ENCODE measurements at regions of chr3 and their contacts with region 1.

Region 1: GRCh38 chr3:97971677-97972567 is at the start of gene RIOX2:
- DNase-seq: peak; percentile 83
- ATAC-seq: peak; percentile 92
- H3K4me3 ChIP-seq: peak within 1 kb of the TSS; percentile 13 to 73 (median 64)
- H3K4me3 Mint-ChIP-seq: peak within 1 kb of the TSS; percentile 98
- H3K27ac ChIP-seq: peak within 1 kb of the TSS; percentile 49 to 77
- H3K27ac Mint-ChIP-seq: peak within 1 kb of the TSS; percentile 96
- H3K4me1 ChIP-seq: peaks cover 15 to 16% of the 10 kb centered on the region in 2 donors
- H3K4me1 Mint-ChIP-seq: peaks cover 38% of the 10 kb centered on the region
- H3K27me3 ChIP-seq: no peaks in the 10 kb centered on the region
- H3K27me3 Mint-ChIP-seq: no peaks in the 10 kb centered on the region
- CTCF ChIP-seq: no peak
- total RNA-seq, gene RIOX2: 23.6 and 27.8 TPM in 2 replicates

Region 2: DNA sequence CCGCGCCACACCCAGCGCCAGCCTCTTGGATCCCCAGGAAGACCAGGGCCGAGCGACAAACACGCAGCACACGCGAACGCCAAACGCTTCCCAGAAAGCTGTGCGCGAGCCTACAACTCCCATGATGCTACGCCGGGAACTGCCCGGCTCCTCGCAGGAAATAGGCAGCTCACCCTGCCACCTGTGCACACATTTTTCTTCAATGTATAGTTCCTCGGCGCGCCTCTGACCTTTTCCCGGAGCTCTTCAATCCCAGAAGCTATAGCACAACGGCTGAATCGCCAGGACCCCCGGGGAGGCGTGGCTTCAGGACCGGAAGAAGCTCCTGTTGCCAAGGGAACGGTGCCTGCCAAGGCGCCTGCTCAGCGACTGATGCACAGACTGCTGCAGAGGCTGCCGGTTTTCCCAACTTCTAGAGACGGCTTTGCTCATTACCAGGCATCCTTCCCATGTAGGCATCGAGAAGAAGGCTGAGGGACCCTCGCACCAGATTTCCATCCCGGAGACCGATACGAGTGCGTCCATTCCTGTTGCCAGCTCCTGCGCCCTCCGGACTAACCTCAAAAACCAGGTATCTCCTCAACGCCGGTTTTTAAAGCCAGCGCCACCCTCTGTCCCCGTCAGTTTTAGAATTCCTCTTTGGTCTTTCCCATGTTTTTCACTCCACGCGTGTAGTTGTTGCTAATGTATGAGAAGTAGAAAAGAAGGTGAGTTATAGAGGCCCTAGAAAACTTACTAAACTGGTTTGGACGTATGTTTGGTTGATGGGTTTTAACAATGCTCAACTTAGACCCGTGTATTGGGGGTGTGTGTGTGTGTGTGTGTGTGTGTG is 207.3 kb before region 1 on chr3 and contains the start of gene ARL6:
- CTCF ChIA-PET with region 1: no interaction called
- POLR2A ChIA-PET with region 1: no interaction called
- intact Hi-C with region 1: loop called (anchors 2 kb)
- DNase-seq: peak; percentile 85
- ATAC-seq: peak; percentile 87
- H3K4me3 ChIP-seq: peak within 1 kb of the TSS; percentile 74 to 99 (median 96)
- H3K4me3 Mint-ChIP-seq: peak within 1 kb of the TSS; percentile 98
- H3K27ac ChIP-seq: peak within 1 kb of the TSS; percentile 69 to 74
- H3K27ac Mint-ChIP-seq: peak within 1 kb of the TSS; percentile 96
- H3K4me1 ChIP-seq: peaks cover 13% of the 10 kb centered on the region in 2 donors
- H3K4me1 Mint-ChIP-seq: peaks cover 30% of the 10 kb centered on the region
- H3K27me3 ChIP-seq: no peaks in the 10 kb centered on the region
- H3K27me3 Mint-ChIP-seq: no peaks in the 10 kb centered on the region
- CTCF ChIP-seq: no peak
- total RNA-seq, gene ARL6: 5.6 and 7.5 TPM in 2 replicates

Region 3: DNA sequence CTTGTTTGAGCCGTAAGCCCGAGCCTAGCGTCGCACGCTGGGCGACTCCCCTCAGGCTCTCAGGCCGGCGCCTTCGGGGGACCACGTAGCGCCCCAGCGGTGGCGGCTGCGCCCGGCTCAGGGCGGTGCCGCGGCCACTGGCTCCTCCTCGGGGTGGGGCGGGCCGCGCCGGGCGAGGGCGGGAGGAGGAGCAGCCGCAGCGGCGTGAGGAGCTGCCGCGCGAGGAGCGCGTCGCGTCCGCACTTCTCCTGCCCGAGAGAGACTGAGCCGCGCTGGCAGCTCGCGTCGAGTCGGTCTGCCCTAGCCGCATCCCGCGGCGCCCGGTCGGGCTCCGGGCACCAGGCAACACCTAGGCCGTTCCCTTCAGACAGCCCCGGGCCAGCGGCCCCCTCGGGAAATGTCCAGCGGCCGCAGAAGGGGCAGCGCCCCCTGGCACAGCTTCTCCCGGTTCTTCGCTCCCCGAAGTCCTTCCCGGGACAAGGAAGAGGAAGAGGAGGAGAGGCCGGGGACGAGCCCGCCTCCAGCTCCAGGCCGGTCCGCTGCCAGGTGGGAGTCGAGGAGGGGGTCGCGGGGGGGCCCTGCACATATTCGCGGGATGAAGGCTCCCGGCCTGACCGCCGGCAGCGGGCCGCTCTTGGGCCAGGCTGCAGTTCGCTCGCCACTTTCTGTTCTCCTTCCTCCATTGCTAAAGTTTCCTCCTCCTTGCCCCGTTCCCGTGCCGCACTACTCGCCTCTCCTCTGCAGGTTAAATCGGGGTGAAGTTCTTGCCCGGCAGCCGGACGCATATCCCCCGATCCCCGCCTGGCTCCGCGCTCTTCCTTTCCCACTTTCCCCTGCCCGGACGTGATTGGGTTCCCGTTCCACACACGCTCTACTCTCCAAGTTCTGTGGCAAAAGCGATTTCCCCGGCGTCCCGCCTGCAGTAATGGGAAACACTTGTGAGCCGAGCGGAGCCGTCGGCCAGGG is 149.8 kb before region 1 on chr3 and contains the start of gene CRYBG3:
- CTCF ChIA-PET with region 1: no interaction called
- POLR2A ChIA-PET with region 1: no interaction called
- intact Hi-C with region 1: loop called (anchors 1 kb)
- DNase-seq: peak; percentile 87
- ATAC-seq: peak; percentile 99
- H3K4me3 ChIP-seq: peak within 1 kb of the TSS; percentile 65 to 93 (median 70)
- H3K4me3 Mint-ChIP-seq: peak within 1 kb of the TSS; percentile 95
- H3K27ac ChIP-seq: peak within 1 kb of the TSS in 1 of 2 donors; percentile 22
- H3K27ac Mint-ChIP-seq: peak within 1 kb of the TSS; percentile 85
- H3K4me1 ChIP-seq: peaks cover 15 to 17% of the 10 kb centered on the region in 2 donors
- H3K4me1 Mint-ChIP-seq: peaks cover 24% of the 10 kb centered on the region
- H3K27me3 ChIP-seq: peaks cover 0 to 26% (median 15%) of the 10 kb centered on the region in 4 experiments
- H3K27me3 Mint-ChIP-seq: peaks cover 55% of the 10 kb centered on the region
- CTCF ChIP-seq: no peak
- total RNA-seq, gene CRYBG3: 2.0 and 2.2 TPM in 2 replicates

Region 4: DNA sequence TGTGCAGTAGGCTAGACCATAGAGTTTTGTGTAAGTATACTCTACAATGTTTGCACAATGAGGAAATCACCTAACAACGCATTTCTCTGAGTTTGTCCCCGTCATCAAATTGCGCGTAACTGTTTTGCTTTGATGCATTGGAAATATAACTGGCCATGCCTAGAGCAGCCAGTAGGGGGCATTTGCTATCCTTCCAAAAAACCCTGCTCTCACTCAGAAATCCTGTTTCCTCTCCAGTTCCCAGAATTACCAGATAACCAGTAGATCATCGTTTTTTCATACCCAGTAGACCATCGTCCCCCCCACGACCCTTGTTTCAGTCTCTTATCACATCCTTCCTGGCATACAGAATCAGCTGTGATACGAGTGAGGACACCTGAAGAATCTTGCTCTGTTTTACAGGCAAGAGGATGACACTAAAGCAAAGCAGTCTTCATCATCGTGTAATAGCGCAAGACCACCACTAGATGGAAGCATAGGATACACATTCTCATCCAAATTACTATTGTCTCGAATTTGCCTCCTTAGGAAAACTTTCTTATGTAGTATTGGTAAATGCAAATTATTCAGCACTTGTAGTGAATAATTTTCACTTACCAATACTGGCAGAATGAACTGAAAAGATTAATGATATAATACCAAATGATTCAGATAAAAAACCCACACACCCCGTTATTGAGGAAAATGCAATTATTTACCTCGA is 67.6 kb after region 1 on chr3:
- CTCF ChIA-PET with region 1: no interaction called
- POLR2A ChIA-PET with region 1: no interaction called
- intact Hi-C with region 1: loop called (anchors 1 kb)
- DNase-seq: peak; percentile 87
- ATAC-seq: peak; percentile 97
- H3K4me3 ChIP-seq: peak overlapping the region in 4 of 5 experiments; percentile 23 to 58 (median 42)
- H3K4me3 Mint-ChIP-seq: peak overlapping the region; percentile 85
- H3K27ac ChIP-seq: no peak overlapping the region
- H3K27ac Mint-ChIP-seq: peak overlapping the region; percentile 59
- H3K4me1 ChIP-seq: peaks cover 0 to 5% of the 10 kb centered on the region in 2 donors
- H3K4me1 Mint-ChIP-seq: peaks cover 5% of the 10 kb centered on the region
- H3K27me3 ChIP-seq: peaks cover 0 to 4% (median 0%) of the 10 kb centered on the region in 4 experiments
- H3K27me3 Mint-ChIP-seq: peaks cover 27% of the 10 kb centered on the region
- CTCF ChIP-seq: peak; percentile 98

Region 5: DNA sequence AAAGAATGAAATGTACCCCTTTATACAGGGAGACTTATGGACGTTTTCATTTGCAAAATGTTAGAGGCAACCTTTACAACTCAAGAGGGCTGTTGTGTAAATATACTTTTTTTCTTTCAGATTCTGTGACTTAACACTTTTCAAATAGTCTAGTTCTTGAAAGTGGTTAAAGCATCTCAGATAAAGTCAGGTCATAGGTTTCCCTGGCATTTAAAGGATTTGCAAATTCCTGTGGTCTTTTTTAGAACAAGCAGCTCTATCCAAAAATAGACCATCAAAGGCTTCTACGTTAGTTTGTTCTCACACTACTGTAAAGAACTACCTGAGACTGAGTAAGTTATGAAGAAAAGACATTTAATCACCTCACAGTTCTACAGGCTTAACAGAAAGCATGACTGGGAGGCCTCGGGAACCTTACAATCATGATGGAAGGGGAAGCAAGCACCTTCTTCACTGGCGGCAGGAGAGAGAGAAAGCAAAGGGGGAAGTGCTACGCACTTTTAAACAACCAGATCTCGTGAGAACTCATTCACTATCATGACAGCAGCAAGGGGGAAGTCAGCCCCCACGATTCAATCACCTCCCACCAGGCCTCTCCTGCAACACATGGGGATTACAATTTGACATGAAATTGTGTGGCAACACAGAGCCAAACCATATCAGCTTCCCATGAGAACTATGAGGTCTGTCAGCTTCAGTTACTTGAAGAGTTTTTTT is 86.5 kb after region 1 on chr3:
- CTCF ChIA-PET with region 1: no interaction called
- POLR2A ChIA-PET with region 1: no interaction called
- intact Hi-C with region 1: no loop called
- DNase-seq: no peak
- ATAC-seq: no peak
- H3K4me3 ChIP-seq: no peak overlapping the region
- H3K4me3 Mint-ChIP-seq: no peak overlapping the region
- H3K27ac ChIP-seq: no peak overlapping the region
- H3K27ac Mint-ChIP-seq: no peak overlapping the region
- H3K4me1 ChIP-seq: no peaks in the 10 kb centered on the region
- H3K4me1 Mint-ChIP-seq: no peaks in the 10 kb centered on the region
- H3K27me3 ChIP-seq: no peaks in the 10 kb centered on the region
- H3K27me3 Mint-ChIP-seq: peaks cover 11% of the 10 kb centered on the region
- CTCF ChIP-seq: no peak

Measured in B cell (primary cell).